CD4-positive, alpha-beta T cell (primary cell): ENCODE measurements at regions of chr1 and their contacts with region 1.

Region 1: GRCh38 chr1:150906341-150906740 is 19.4 kb downstream of the CTXND2 start:
- DNase-seq: no peak
- ATAC-seq: no peak
- H3K4me3 ChIP-seq: no peak overlapping the region
- H3K4me3 Mint-ChIP-seq: no peak overlapping the region
- H3K27ac ChIP-seq: no peak overlapping the region
- H3K27ac Mint-ChIP-seq: no peak overlapping the region
- H3K4me1 ChIP-seq: no peaks in the 10 kb centered on the region
- H3K4me1 Mint-ChIP-seq: no peaks in the 10 kb centered on the region
- H3K27me3 ChIP-seq: no peaks in the 10 kb centered on the region
- H3K27me3 Mint-ChIP-seq: no peaks in the 10 kb centered on the region
- CTCF ChIP-seq: no peak

Region 2: GRCh38 chr1:151372061-151372934 is 466.0 kb after region 1 on chr1 and contains the start of gene SELENBP1:
- CTCF ChIA-PET with region 1: no interaction called
- POLR2A ChIA-PET with region 1: no interaction called
- intact Hi-C with region 1: loop called in 1 of 2 experiments (anchors 5 kb)
- DNase-seq: no peak
- ATAC-seq: no peak
- H3K4me3 ChIP-seq: no peak within 1 kb of the TSS
- H3K4me3 Mint-ChIP-seq: no peak within 1 kb of the TSS
- H3K27ac ChIP-seq: no peak within 1 kb of the TSS
- H3K27ac Mint-ChIP-seq: no peak within 1 kb of the TSS
- H3K4me1 ChIP-seq: no peaks in the 10 kb centered on the region
- H3K4me1 Mint-ChIP-seq: no peaks in the 10 kb centered on the region
- H3K27me3 ChIP-seq: no peaks in the 10 kb centered on the region
- H3K27me3 Mint-ChIP-seq: no peaks in the 10 kb centered on the region
- CTCF ChIP-seq: no peak
- total RNA-seq, gene SELENBP1: not detected